HepG2 (cell line): ENCODE measurements at regions of chr1 and their contacts with region 1.

Region 1: GRCh38 chr1:113003751-113004690 is 48.0 kb upstream of the SLC16A1 start:
- DNase-seq: peak; percentile 87
- ATAC-seq: peak; percentile 91
- H3K4me3 ChIP-seq: peak overlapping the region in 1 of 3 experiments; percentile 5; a peak in 3 of 6 replicates
- H3K27ac ChIP-seq: peak overlapping the region; percentile 85
- H3K4me1 ChIP-seq: peaks cover 61% of the 10 kb centered on the region
- H3K27me3 ChIP-seq: no peaks in the 10 kb centered on the region
- CTCF ChIP-seq: no peak
- EP300 ChIP-seq: peak in 1 of 2 experiments; percentile 88; a peak in 2 of 4 replicates
- POLR2A ChIP-seq: no peak
- RAD21 ChIP-seq: no peak

Region 2: DNA sequence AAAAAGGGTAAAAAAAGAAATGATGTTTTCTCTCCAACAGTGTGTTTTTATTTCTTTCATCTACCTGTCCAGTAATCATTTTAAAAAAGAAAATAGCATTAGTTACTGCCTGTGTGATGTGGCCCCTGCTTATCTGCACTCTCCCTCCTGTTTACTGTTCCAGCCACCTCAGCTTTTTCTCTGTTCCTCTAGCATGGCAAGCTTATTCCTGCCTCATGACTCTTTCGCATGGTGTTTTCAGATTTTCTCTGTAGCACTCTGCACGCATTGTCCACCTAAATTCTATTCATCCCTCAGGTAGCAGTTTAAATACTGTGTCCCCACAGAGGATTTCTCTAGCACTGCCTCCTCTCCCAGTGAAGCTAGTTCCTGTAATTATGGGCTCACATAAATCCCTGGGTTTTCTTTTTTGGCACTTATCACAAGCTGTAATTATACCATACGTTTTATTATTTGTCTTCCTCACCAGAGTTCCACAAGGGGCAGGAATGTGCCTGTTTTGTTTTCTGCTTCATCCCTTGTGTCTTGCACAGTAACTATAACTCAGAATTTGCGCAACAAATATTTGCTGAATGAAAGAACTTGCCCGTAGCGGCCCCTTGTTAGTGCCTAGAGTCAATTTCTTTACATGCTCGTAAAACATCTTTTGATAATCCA is 17.5 kb after region 1 on chr1:
- CTCF ChIA-PET with region 1: no interaction called
- POLR2A ChIA-PET with region 1: interaction called, 10 read pairs
- in situ Hi-C with region 1: no loop called
- intact Hi-C with region 1: no loop called
- DNase-seq: peak; percentile 74
- ATAC-seq: peak; percentile 83
- H3K4me3 ChIP-seq: peak overlapping the region in 2 of 3 experiments; percentile 24 to 39; a peak in 2 of 6 replicates
- H3K27ac ChIP-seq: peak overlapping the region; percentile 69
- H3K4me1 ChIP-seq: peaks cover 52% of the 10 kb centered on the region
- H3K27me3 ChIP-seq: no peaks in the 10 kb centered on the region
- CTCF ChIP-seq: no peak; the same call in 1 of the 2 replicates
- EP300 ChIP-seq: peak in 1 of 2 experiments; percentile 42; a peak in 2 of 4 replicates
- POLR2A ChIP-seq: no peak
- RAD21 ChIP-seq: 0 out of 2 replicates have a peak, but pooled peaks have one; percentile 26

Region 3: DNA sequence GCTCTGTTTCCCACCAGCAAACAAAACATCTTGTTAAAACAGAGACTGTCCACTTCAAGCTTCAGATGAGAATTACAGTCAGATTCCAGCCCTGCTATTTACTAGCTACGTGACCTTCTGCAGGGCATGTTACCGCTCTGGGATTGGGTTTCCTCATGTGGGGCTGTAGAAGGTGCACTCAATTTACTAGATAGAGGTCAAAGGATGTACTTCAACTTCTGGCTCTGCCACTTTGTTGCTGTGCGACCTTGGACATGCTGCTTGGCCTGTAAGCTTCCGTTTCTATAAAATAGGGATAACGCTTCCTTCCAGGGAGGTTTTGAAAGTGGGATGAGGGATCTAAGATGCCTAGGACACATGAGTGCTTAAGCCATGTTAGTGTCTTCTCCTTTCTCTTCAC is 23.0 kb after region 1 on chr1:
- CTCF ChIA-PET with region 1: no interaction called
- POLR2A ChIA-PET with region 1: interaction called, 10 read pairs
- in situ Hi-C with region 1: no loop called
- intact Hi-C with region 1: no loop called
- DNase-seq: peak; percentile 56
- ATAC-seq: peak; percentile 90
- H3K4me3 ChIP-seq: peak overlapping the region; percentile 31 to 38 (median 36); a peak in 5 of 6 replicates
- H3K27ac ChIP-seq: peak overlapping the region; percentile 60
- H3K4me1 ChIP-seq: peaks cover 69% of the 10 kb centered on the region
- H3K27me3 ChIP-seq: no peaks in the 10 kb centered on the region
- CTCF ChIP-seq: no peak
- EP300 ChIP-seq: peak in 1 of 2 experiments; percentile 42; a peak in 1 of 4 replicates
- POLR2A ChIP-seq: 0 out of 4 replicates have a peak, but pooled peaks of 1 of the 2 experiments have one; percentile 23
- RAD21 ChIP-seq: no peak

Region 4: DNA sequence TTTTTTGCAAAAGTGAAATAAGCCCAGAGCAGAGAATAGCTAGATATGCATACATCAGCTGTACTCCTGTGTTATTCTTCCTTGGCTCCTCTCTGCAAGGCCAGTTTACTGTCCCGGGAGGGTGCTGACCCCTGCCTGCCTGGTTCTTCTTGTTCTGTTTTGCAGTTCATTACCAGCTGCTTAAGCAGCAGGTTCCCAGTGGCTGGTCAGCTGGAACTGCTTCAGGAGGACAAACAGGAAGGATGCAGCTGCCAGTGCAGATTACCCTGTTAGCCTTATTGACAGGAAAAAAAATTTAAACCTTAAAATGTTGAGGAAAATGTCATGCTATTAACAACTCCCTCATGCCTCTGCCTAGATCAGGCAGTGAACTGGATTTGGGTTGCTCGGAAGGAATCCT is 53.0 kb after region 1 on chr1:
- CTCF ChIA-PET with region 1: no interaction called
- POLR2A ChIA-PET with region 1: no interaction called
- in situ Hi-C with region 1: no loop called
- intact Hi-C with region 1: no loop called
- DNase-seq: no peak
- ATAC-seq: peak; percentile 25; the same call in 1 of the 3 replicates
- H3K4me3 ChIP-seq: no peak overlapping the region
- H3K27ac ChIP-seq: no peak overlapping the region
- H3K4me1 ChIP-seq: peaks cover 45% of the 10 kb centered on the region
- H3K27me3 ChIP-seq: no peaks in the 10 kb centered on the region
- CTCF ChIP-seq: peak; percentile 31; the same call in 1 of the 2 replicates
- EP300 ChIP-seq: no peak
- POLR2A ChIP-seq: no peak
- RAD21 ChIP-seq: no peak

Region 5: DNA sequence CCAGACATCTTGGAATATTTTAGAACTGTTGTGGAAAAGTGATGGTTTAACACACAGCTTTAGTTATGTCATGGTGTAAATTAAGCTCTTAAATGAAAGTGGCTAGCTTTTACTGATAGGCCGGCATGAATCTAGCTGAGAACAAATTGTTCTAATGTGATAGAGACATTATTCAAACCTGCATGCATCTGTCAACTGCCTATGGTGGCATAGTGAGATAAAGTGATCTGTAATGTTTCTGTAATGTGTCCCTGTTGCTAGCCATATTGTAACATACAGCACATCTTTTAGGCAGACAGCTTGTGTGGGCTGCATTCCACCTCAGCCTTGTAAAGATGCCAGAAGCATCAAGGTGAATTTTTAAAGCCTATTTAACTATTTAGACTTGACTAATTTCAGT is 85.0 kb after region 1 on chr1:
- CTCF ChIA-PET with region 1: no interaction called
- POLR2A ChIA-PET with region 1: no interaction called
- in situ Hi-C with region 1: no loop called
- intact Hi-C with region 1: no loop called
- DNase-seq: no peak
- ATAC-seq: no peak
- H3K4me3 ChIP-seq: no peak overlapping the region
- H3K27ac ChIP-seq: no peak overlapping the region
- H3K4me1 ChIP-seq: peaks cover 13% of the 10 kb centered on the region
- H3K27me3 ChIP-seq: no peaks in the 10 kb centered on the region
- CTCF ChIP-seq: no peak
- EP300 ChIP-seq: no peak
- POLR2A ChIP-seq: no peak
- RAD21 ChIP-seq: no peak

Region 6: GRCh38 chr1:113109908-113110554 is 106.0 kb after region 1 on chr1:
- CTCF ChIA-PET with region 1: no interaction called
- POLR2A ChIA-PET with region 1: no interaction called
- in situ Hi-C with region 1: no loop called
- intact Hi-C with region 1: no loop called
- DNase-seq: no peak
- ATAC-seq: no peak
- H3K4me3 ChIP-seq: no peak overlapping the region
- H3K27ac ChIP-seq: no peak overlapping the region
- H3K4me1 ChIP-seq: no peaks in the 10 kb centered on the region
- H3K27me3 ChIP-seq: no peaks in the 10 kb centered on the region
- CTCF ChIP-seq: no peak
- EP300 ChIP-seq: no peak
- POLR2A ChIP-seq: no peak
- RAD21 ChIP-seq: no peak